ENCODE measurements at regions of chr1 and their contacts with region 1.

Region 1: DNA sequence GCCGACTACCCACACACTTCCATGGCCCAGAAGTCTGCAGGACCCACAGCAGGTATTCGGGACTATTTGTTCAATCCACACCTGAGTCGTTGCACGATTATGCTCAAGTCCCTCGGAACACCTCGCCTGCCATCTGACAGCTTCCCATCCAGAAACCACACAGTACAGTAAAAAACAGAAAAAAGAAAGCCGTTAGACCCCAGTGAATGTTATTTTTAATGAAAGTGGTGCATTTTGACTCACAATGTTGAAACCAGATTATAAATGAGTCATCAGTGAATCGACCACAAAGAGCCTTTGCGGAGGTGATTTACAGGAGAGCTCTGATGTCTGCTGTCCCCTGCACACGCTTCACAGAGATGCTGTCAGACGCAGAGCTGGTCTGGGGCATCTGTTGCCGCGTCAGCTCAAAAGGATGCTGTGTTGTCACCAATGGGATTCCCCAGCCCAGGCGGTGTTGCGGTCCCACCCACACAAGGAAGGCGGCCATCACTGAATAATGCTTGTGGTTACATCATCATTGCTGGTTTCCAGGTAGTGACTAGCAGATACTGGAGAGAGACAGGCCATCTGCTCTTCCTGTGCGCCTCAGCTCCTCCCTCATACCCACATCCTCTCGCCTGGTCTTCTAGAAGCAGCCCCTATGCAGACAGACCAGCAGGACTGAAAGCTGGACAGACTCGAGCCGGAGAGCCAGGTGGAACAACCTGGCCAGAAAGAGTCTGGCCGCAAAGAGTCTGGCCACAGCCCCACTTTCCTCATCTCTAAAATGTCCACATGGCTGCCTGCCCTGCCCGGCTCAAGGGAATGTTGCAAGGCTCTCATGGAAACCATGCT is 116.8 kb downstream of the TOMM20 start:
- DNase-seq: peak; percentile 99
- H3K4me3 Mint-ChIP-seq: peak overlapping the region; percentile 56
- H3K27ac Mint-ChIP-seq: peak overlapping the region; percentile 94
- H3K4me1 Mint-ChIP-seq: peaks cover 89% of the 10 kb centered on the region
- H3K27me3 Mint-ChIP-seq: no peaks in the 10 kb centered on the region

Region 2: GRCh38 chr1:234398849-234399381 is 612.9 kb before region 1 on chr1:
- CTCF ChIA-PET with region 1: interaction called, 3 read pairs
- intact Hi-C with region 1: loop called (anchors 2 kb)
- DNase-seq: peak; percentile 23
- H3K4me3 Mint-ChIP-seq: peak overlapping the region; percentile 60
- H3K27ac Mint-ChIP-seq: peak overlapping the region; percentile 91
- H3K4me1 Mint-ChIP-seq: peaks cover 58% of the 10 kb centered on the region
- H3K27me3 Mint-ChIP-seq: no peaks in the 10 kb centered on the region

Region 3: DNA sequence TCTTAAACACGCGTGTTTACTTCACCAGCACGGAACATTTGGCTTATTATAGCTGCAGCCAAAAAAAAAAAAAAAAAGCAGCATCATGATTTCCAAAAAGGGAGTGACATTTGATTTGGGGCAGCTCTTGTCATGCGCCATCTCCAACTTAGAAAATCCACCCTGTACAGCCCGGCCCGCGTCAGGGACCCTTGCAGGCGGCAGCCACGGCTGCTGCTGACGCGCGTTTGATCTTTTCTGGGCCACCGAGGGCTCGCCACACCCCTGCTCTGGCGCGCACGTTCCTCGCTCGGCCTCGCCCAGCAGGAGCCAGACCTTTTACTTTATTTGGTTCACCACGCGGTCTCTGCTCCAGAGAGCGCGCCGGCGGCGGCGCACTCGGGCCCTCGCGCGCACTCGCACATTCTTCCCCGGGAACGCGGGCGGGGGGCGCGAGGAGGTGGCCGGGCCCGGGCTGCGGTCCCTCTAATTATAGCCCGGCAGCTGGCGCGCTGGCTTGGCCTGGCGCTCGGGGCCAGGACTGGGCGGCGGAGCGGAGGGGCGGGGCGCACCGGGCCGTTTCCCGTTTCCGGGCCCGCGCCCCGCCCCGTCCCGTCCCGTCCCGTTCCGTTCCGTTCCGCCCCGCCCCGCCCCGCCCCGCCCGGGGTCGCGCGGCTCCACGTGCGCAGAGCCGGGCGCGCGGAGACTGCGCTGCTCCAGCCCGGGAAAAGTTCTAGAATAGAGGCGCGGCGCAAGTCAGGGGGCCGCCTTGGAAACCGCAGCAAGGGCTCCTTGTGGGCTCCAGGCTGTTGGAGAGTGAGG is 412.0 kb before region 1 on chr1:
- CTCF ChIA-PET with region 1: interaction called, 3 read pairs
- intact Hi-C with region 1: loop called (anchors 2 kb)
- DNase-seq: peak; percentile 74
- H3K4me3 Mint-ChIP-seq: peak overlapping the region; percentile 83
- H3K27ac Mint-ChIP-seq: peak overlapping the region; percentile 99
- H3K4me1 Mint-ChIP-seq: peaks cover 50% of the 10 kb centered on the region
- H3K27me3 Mint-ChIP-seq: no peaks in the 10 kb centered on the region

Region 4: DNA sequence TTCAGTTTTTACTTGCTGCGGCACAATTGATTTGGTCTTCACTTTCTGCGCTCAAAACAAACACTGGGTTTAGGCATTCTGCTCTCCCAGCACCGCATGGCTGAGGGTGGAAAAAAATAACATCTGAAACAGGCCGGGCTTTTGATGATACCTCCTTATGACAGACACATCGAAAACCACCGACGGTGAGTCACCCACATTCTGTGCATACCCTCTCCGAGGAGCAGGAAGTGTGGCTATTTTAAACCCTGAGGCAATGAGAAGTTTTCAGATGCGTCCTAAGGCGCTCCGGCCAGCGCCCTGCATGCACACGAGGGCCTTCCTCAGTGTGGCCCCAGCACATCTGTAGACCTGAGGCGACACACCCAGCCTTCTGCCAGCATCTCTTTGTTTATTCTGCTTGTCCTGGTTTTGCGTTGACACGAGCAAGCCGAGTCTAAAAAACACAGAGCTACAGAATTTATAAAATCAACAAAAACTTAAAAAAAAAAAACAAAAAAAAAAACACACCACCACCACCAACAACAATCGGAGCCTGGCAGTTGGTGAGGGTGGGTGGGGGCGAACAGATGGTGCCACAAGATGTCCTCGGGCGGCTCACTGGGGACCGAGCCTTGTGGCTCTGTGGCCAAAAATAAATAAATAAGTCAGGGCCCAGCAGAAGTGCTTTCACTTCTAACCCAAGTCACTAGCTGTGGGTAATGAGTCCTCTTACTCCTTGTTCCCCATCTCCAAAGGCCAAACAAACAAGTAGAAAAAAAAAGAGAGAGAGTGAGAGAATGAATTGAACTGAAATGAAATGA is 239.3 kb before region 1 on chr1:
- CTCF ChIA-PET with region 1: no interaction called
- intact Hi-C with region 1: loop called (anchors 1 kb)
- DNase-seq: peak; percentile 97
- H3K4me3 Mint-ChIP-seq: peak overlapping the region; percentile 61
- H3K27ac Mint-ChIP-seq: peak overlapping the region; percentile 92
- H3K4me1 Mint-ChIP-seq: peaks cover 59% of the 10 kb centered on the region
- H3K27me3 Mint-ChIP-seq: no peaks in the 10 kb centered on the region

Region 5: DNA sequence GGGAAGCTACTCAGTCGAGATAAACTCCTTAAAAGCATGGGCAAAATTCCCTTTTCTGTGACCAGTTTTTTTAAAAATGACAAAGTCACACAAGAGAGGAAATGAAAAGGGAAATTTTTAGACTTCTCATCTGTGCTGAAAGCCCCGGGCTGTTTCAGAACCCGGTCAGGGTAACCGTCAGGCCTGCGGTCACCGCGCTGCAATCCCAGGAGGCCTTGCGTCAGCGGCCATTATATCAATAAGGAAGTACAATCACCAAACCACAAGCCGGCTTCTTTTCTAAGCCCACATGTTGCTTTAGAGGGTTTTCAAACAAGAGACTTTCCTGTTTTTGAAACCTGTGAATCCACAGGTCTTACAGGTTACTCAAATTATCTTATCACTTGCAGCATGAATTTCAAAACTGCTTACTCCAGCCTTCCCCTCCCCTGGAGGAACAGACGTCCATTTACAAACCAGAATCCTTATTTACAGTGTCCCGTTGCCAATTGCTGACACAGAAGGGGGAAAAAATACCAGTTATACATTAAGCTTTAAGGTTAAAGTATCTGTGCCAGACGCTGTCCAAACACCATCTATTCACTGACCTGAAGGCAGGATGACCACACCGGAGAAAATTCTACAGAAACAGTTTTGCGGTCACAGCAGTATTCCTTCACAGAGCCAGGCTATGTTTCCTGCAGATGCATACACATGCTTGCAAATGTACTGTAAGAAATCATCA is 48.5 kb before region 1 on chr1:
- CTCF ChIA-PET with region 1: interaction called, 8 read pairs
- intact Hi-C with region 1: loop called (anchors 1 kb)
- DNase-seq: peak; percentile 98
- H3K4me3 Mint-ChIP-seq: peak overlapping the region; percentile 35
- H3K27ac Mint-ChIP-seq: peak overlapping the region; percentile 97
- H3K4me1 Mint-ChIP-seq: peaks cover 72% of the 10 kb centered on the region
- H3K27me3 Mint-ChIP-seq: no peaks in the 10 kb centered on the region

Region 6: DNA sequence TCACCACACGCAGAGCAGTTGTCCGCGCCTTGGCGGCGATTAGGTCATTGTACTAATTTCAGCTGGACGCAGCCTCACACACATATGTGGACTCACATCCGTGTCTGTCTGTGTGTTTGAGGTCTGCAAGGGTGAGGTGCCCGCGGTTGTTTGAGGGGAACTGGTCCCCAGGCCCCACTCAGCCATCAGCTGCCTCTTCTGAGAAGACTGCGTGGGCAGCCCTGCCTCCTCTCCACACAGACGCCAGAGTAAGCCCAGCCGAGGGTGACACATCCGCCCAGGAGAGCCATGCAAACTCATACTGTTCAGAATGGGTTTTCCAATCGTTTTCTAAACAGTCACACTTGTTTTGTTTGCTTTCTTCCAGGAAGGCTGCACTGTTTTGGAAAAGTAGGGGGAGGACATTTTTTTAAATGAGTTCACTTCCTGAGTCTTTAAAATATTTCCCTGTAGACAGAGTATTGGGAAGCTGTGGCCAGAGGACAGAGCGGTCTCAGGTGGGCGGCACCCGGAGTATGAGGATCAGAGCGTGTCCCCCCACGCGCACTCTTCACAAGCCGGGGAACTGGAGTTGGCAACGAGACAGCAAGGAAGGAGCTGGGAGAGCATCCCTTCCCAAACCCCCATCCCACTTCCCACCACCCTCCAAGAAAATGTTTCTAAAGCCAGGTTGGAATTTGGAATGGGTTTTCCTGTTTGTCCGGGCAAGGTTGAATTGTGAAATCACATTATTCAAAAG is 63.5 kb after region 1 on chr1:
- CTCF ChIA-PET with region 1: no interaction called
- intact Hi-C with region 1: loop called (anchors 1 kb)
- DNase-seq: peak; percentile 83
- H3K4me3 Mint-ChIP-seq: peak overlapping the region; percentile 0
- H3K27ac Mint-ChIP-seq: peak overlapping the region; percentile 90
- H3K4me1 Mint-ChIP-seq: peaks cover 36% of the 10 kb centered on the region
- H3K27me3 Mint-ChIP-seq: no peaks in the 10 kb centered on the region

Region 7: GRCh38 chr1:235423191-235423652 is 411.4 kb after region 1 on chr1:
- CTCF ChIA-PET with region 1: no interaction called
- intact Hi-C with region 1: no loop called
- DNase-seq: peak; percentile 66
- H3K4me3 Mint-ChIP-seq: no peak overlapping the region
- H3K27ac Mint-ChIP-seq: no peak overlapping the region
- H3K4me1 Mint-ChIP-seq: peaks cover 16% of the 10 kb centered on the region
- H3K27me3 Mint-ChIP-seq: no peaks in the 10 kb centered on the region

Measured in activated naive CD4-positive, alpha-beta T cell treated with anti-CD3 and anti-CD28 coated beads for 36 hours (primary cell).